ENCODE measurements at regions of chr5 and their contacts with region 1.

Region 1: GRCh38 chr5:2013301-2014057 is 130.8 kb upstream of the IRX4 start:
- DNase-seq: no peak
- ATAC-seq: peak; percentile 24

Region 2: GRCh38 chr5:1948663-1949652 is 64.5 kb before region 1 on chr5:
- intact Hi-C with region 1: loop called (anchors 2 kb)
- DNase-seq: peak; percentile 79
- ATAC-seq: peak; percentile 91

Measured in Right ventricle myocardium inferior (tissue), 1 donor.